Activated CD4-positive, alpha-beta T cell treated with anti-CD3 and anti-CD28 coated beads, Interleukin-2, amount 10 ng/mL, durations not matched to agents 7 days and 5 days (primary cell): ENCODE measurements at regions of chr4 and their contacts with region 1.

Region 1: GRCh38 chr4:98482847-98483806 is 175.3 kb downstream of the TSPAN5 start:
- DNase-seq: no peak
- H3K4me3 Mint-ChIP-seq: no peak overlapping the region
- H3K27ac Mint-ChIP-seq: peak overlapping the region; percentile 42
- H3K4me1 Mint-ChIP-seq: peaks cover 61% of the 10 kb centered on the region
- H3K27me3 Mint-ChIP-seq: no peaks in the 10 kb centered on the region

Region 2: GRCh38 chr4:98162696-98163095 is 320.4 kb before region 1 on chr4:
- CTCF ChIA-PET with region 1: no interaction called
- POLR2A ChIA-PET with region 1: no interaction called
- DNase-seq: no peak
- H3K4me3 Mint-ChIP-seq: no peak overlapping the region
- H3K27ac Mint-ChIP-seq: no peak overlapping the region
- H3K4me1 Mint-ChIP-seq: no peaks in the 10 kb centered on the region
- H3K27me3 Mint-ChIP-seq: peaks cover 2% of the 10 kb centered on the region

Region 3: GRCh38 chr4:98467627-98468072 is 15.5 kb before region 1 on chr4:
- CTCF ChIA-PET with region 1: interaction called, 10 read pairs
- POLR2A ChIA-PET with region 1: no interaction called
- DNase-seq: peak; percentile 81
- H3K4me3 Mint-ChIP-seq: peak overlapping the region; percentile 51
- H3K27ac Mint-ChIP-seq: peak overlapping the region; percentile 10
- H3K4me1 Mint-ChIP-seq: peaks cover 28% of the 10 kb centered on the region
- H3K27me3 Mint-ChIP-seq: no peaks in the 10 kb centered on the region

Region 4: DNA sequence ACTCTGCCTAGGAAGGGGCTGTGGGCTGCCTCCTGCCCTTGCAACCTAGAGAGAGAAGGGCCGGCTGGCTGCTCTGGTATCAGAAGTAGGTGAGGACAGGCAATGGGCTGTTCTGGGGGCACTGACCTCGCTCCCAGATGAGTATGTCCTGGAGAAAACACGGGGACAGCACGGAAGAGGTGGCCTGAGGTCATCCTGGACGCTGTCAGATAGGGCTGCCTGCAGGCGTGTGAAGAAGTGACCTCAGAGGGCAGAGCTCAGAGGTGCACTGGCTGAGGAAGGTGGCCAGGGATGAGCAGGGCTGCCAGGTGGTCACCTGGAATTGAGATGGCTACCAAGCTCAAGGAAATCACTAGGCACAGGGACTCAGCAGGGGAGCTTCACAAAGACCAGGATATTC is 15.6 kb after region 1 on chr4:
- CTCF ChIA-PET with region 1: no interaction called
- POLR2A ChIA-PET with region 1: no interaction called
- DNase-seq: no peak
- H3K4me3 Mint-ChIP-seq: no peak overlapping the region
- H3K27ac Mint-ChIP-seq: no peak overlapping the region
- H3K4me1 Mint-ChIP-seq: peaks cover 17% of the 10 kb centered on the region
- H3K27me3 Mint-ChIP-seq: no peaks in the 10 kb centered on the region

Region 5: GRCh38 chr4:98890702-98891455 is 407.8 kb after region 1 on chr4:
- CTCF ChIA-PET with region 1: no interaction called
- POLR2A ChIA-PET with region 1: no interaction called
- DNase-seq: no peak
- H3K4me3 Mint-ChIP-seq: no peak overlapping the region
- H3K27ac Mint-ChIP-seq: no peak overlapping the region
- H3K4me1 Mint-ChIP-seq: no peaks in the 10 kb centered on the region
- H3K27me3 Mint-ChIP-seq: no peaks in the 10 kb centered on the region